Right ventricle myocardium inferior (tissue), 1 donor: ENCODE measurements at regions of chr14 and their contacts with region 1.

Region 1: DNA sequence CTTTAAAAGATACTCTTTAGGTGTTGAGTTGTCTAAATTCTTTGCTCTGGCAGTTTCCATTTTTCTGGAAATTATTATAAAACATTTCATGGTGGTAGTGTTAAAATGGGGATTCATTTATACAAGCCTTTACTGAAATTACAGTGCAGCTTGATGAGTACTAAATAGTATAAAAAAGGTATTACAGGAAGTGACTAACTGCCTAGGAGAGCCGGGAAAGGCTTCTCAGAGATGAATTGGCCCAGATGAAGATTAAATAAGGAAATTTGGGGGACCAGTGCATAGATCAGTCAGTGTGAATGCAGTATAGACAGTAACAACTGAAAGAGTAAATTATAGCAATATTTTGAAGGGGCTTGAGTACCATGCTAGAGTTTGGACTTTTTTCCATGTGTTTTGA is 7.5 kb downstream of the PSMA6 start:
- DNase-seq: no peak
- ATAC-seq: no peak

Region 2: DNA sequence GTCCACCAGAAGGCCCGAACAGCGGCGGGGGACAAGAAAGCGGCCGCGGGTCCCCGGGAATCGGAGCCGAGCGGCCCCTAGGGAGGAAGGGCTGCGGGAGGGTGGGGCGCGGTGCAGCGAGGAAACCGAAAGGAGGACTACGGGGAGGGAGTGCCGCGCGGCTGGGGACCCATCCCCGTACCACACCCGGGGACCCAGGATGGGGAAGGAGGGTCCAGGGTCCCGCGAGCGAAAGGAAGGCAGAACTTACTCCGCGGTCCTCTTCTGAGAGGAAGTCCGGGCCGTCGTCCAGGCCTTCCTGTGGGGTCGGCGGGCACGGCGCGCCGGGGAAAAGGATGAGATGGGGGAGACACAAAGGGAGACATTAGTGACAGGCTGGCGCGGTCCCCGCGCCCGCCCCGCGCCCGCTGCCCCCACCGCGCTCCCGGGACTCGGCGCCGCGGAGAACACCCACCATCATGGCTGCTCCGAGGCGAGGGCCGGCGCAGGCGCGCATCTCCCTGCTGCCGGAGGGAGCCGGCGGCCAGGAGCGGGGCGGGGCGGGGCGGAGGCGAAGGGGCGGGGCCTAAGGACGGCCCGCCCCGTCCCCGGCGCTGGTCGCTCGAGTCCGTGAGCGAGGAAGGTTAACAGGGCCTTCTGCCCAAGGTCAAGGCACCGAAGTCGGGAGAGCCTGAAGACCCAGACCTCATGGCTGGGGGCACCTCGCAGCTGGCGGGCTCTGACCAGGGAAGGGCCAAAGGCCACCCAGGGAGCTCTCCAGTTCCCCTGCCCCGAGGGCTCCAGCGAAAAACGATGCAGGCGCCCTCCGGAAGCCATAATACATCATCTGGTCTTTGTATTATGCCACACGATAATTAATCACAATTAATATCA is 669.8 kb before region 1 on chr14 and contains the start of gene SNX6:
- intact Hi-C with region 1: loop called (anchors 5 kb)
- DNase-seq: peak; percentile 95
- ATAC-seq: peak; percentile 98
- total RNA-seq, gene SNX6: 66.4 TPM

Region 3: DNA sequence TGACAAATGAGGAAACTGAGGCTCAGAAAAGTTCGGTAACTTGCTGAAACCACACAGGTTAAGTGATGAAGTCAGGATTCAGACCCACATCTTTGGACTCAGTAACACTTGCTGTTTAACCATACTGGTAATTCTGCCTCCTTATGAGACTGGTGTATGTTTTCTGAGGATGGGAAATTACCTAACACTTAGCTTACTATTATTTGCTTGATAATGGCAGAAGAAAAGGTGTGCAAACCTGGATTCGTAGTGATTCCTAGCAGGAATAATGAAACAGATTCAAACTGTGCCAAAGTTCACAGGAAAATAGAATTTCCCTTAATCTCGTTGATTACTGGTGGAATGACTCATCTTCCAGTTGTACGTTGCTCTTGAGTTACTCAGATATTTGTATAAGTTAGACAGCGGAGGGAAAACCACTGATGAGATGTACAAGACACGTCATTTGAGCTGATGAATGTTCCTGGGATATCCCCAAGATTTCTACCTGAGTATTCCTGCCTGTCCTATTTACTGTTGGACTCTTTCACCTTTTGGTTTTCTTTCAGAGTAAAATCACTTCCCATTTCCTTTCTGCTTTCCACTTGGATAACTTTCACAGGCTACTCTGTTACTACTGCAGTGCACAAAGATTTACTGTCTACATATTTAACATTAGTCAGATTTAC is 139.8 kb before region 1 on chr14:
- intact Hi-C with region 1: no loop called
- DNase-seq: no peak
- ATAC-seq: no peak

Region 4: GRCh38 chr14:35247777-35248475 is 51.8 kb before region 1 on chr14:
- intact Hi-C with region 1: no loop called
- DNase-seq: no peak
- ATAC-seq: no peak

Region 5: GRCh38 chr14:35404449-35405303 is 105.0 kb after region 1 on chr14 and contains the start of gene NFKBIA:
- intact Hi-C with region 1: no loop called
- DNase-seq: peak; percentile 97
- ATAC-seq: peak; percentile 77
- total RNA-seq, gene NFKBIA: 83.0 TPM

Region 6: DNA sequence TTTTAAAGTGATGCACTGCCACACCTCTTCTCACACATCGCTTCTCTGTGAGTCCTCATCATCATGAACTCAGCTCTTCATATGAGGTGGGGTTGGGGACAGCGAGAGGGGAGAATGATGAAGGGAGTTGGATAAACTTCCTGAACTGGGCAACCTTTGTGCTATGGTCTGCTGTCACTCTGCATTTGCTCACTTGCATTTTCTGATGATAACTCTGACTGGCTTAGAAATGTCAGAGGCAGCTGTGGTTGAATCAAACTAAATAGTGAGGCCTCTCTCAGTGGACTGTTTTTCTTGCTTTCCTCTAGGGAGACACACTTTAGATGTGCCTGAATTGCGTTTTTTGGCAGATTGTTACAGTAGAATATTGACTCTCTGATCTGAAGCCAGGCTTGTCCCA is 160.1 kb after region 1 on chr14:
- intact Hi-C with region 1: no loop called
- DNase-seq: no peak
- ATAC-seq: no peak